ENCODE measurements at regions of chr14 and their contacts with region 1.

Region 1: GRCh38 chr14:61730756-61731373 is 31.4 kb upstream of the SNAPC1 start:
- DNase-seq: no peak
- CTCF ChIP-seq: peak; percentile 51

Region 2: DNA sequence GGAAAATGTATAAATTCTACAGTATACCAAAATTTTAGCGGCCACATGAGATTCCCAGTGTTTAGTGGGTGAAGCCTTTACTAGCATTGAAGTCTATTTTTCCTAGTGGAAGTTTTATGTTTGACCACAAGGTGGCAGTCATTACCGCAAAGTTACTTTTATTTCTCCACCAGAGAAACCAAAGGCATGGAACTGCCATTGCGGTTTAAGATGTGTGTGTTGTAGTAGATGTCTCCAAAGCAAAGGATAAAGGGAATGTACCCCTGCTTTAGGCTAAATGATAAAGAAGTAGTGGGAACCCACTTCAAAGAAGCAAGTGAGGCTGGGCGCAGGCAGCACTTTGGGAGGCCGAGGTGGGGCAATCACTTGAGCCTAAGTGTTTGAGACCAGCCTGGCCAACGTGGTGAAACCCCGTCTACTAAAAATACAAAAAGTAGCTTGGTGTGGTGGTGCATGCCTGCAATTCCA is 269.0 kb before region 1 on chr14:
- in situ Hi-C with region 1: loop called (anchors 10 kb)
- DNase-seq: no peak
- CTCF ChIP-seq: peak; percentile 62